ENCODE measurements at regions of chr2 and their contacts with region 1.

Region 1: DNA sequence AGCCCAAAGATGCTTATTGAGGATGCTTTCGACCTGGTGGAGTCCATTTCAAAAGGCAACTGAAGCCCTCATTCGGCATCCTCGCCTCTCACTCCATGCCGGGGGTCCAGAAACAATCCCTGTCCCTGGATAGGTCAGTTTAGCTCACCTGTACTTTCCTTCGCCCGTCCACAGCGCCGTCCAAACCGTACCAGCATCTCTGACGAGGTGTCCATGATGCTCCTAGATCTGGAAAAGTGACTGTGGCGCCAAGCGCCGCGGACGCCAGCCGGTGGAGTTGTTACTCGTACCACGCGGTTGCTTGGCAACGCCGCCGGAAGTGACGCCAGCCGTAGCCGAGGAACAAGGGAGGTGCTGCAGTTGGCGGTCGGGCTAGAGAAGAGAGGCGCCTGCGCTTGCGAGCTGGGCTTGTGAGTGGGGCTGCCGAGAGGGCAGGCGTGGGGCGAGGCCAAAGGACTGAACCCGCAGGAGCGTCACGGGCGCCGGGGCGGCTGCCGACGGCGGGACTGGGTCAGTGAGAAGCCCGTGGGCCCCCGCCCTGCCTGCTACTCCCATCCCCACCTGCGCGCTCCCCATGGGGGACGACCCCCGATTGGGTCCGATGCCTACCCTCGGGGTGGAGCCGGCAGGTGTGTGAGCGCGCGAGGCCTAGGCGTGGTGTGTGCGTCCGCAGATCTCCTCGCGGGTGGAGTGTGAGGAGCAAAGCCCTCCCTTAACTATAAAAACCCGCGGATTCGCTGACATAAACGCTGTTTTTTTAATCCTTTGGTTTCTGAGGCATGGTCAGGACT is at the starts of genes CFAP210 and PHOSPHO2:
- DNase-seq: peak; percentile 96 to 99 (median 98)
- ATAC-seq: peak; percentile 96
- H3K4me3 ChIP-seq: peak within 1 kb of the TSS; percentile 61
- H3K4me3 Mint-ChIP-seq: peak within 1 kb of the TSS; percentile 86 to 98 (median 90)
- H3K27ac ChIP-seq: peak within 1 kb of the TSS; percentile 87
- H3K27ac Mint-ChIP-seq: peak within 1 kb of the TSS; percentile 88 to 100 (median 99)
- H3K4me1 ChIP-seq: peaks cover 5 to 6% of the 10 kb centered on the region in 2 donors
- H3K4me1 Mint-ChIP-seq: peaks cover 5 to 22% (median 18%) of the 10 kb centered on the region in 7 donors
- H3K27me3 ChIP-seq: no peaks in the 10 kb centered on the region
- H3K27me3 Mint-ChIP-seq: peaks cover 0 to 30% (median 10%) of the 10 kb centered on the region in 5 donors
- total RNA-seq, gene CFAP210: 1.0 to 3.6 TPM in 2 of 5 experiments, not detected in the others
- total RNA-seq, gene PHOSPHO2: 4.5 to 9.5 (median 7.5) TPM

Region 2: GRCh38 chr2:169363560-169364150 is 330.7 kb before region 1 on chr2:
- CTCF ChIA-PET with region 1: no interaction called
- POLR2A ChIA-PET with region 1: no interaction called
- intact Hi-C with region 1: loop called in 1 of 2 experiments (anchors 5 kb)
- DNase-seq: peak in 8 of 9 donors; percentile 14 to 49 (median 38)
- ATAC-seq: peak; percentile 58
- H3K4me3 ChIP-seq: peak overlapping the region; percentile 89
- H3K4me3 Mint-ChIP-seq: peak overlapping the region; percentile 87 to 98 (median 94)
- H3K27ac ChIP-seq: no peak overlapping the region
- H3K27ac Mint-ChIP-seq: peak overlapping the region in 4 of 9 donors; percentile 14 to 88 (median 55)
- H3K4me1 ChIP-seq: peaks cover 11 to 18% of the 10 kb centered on the region in 2 donors
- H3K4me1 Mint-ChIP-seq: peaks cover 17 to 37% (median 29%) of the 10 kb centered on the region in 7 donors
- H3K27me3 ChIP-seq: peaks cover 4 to 15% of the 10 kb centered on the region in 2 donors
- H3K27me3 Mint-ChIP-seq: peaks cover 42 to 60% (median 49%) of the 10 kb centered on the region in 5 donors

Region 3: DNA sequence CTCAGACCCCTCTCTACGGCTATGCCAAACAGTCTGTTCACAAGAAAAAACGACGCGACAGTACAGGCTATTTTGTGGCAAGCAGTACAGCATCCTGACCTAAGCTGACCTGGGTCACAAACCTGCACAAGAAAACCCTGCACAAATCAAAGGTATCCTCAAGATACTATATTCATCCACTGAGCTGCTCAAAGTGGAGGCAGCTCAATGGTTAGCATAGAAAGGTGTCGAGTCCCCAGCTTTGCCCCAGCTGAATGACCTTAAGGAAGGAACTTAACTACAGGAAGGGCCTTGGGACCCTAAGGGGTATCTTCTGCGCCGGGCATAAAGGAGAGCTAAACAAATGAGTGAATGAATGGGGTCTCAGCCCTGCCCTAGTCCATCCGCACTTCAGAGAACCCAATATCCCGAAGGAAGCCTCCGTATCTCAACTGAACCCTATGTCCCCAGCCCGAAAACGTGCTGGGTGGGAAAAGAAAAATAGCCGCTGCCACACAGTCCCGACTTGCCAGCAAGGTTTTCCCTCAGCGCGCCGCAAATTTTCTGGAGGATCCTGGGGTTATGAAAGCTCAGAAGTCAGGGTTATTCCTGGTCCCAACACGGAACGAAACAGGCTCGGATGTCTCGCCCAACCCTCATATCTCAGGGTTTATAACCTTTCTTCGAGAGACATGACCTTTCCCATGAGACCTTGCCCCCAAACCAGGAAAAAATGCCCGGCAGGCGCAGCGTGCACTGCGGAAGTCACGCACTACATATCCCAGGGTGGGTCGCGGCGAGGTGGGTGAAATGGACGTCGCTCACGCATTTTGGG is 120.9 kb before region 1 on chr2 and contains the start of gene FASTKD1:
- CTCF ChIA-PET with region 1: no interaction called
- POLR2A ChIA-PET with region 1: no interaction called
- intact Hi-C with region 1: loop called (anchors 1 kb)
- DNase-seq: peak; percentile 55 to 88 (median 76)
- ATAC-seq: peak; percentile 100
- H3K4me3 ChIP-seq: peak within 1 kb of the TSS; percentile 93
- H3K4me3 Mint-ChIP-seq: peak within 1 kb of the TSS; percentile 88 to 99 (median 94)
- H3K27ac ChIP-seq: peak within 1 kb of the TSS; percentile 80
- H3K27ac Mint-ChIP-seq: peak within 1 kb of the TSS; percentile 74 to 95 (median 91)
- H3K4me1 ChIP-seq: peaks cover 4 to 5% of the 10 kb centered on the region in 2 donors
- H3K4me1 Mint-ChIP-seq: peaks cover 14 to 32% (median 24%) of the 10 kb centered on the region in 7 donors
- H3K27me3 ChIP-seq: no peaks in the 10 kb centered on the region
- H3K27me3 Mint-ChIP-seq: peaks cover 0 to 4% (median 0%) of the 10 kb centered on the region in 5 donors
- total RNA-seq, gene FASTKD1: 13.5 to 43.5 (median 31.0) TPM

Region 4: DNA sequence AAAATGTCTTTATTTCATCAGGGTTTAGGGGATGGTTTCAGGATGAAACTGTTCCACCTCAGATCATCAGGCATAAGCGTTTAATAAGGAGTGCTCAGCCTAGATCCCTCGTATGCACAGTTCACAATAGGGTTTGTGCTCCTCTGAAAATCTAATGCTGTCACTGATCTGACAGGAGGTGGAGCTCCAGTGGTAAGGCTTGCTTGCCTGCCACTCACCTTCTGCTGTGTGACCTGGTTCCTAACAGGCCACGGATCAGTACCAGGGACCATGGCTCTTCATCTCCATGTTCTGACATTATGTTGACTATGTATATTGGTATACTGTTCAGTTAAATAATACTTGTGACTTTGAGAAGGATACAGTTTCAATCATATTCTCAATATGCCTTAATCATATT is 68.5 kb before region 1 on chr2:
- CTCF ChIA-PET with region 1: no interaction called
- POLR2A ChIA-PET with region 1: no interaction called
- intact Hi-C with region 1: loop called in 1 of 2 experiments (anchors 5 kb)
- DNase-seq: no peak
- ATAC-seq: no peak
- H3K4me3 ChIP-seq: no peak overlapping the region
- H3K4me3 Mint-ChIP-seq: no peak overlapping the region
- H3K27ac ChIP-seq: no peak overlapping the region
- H3K27ac Mint-ChIP-seq: no peak overlapping the region
- H3K4me1 ChIP-seq: no peaks in the 10 kb centered on the region
- H3K4me1 Mint-ChIP-seq: peaks cover 0 to 15% (median 11%) of the 10 kb centered on the region in 7 donors
- H3K27me3 ChIP-seq: no peaks in the 10 kb centered on the region
- H3K27me3 Mint-ChIP-seq: no peaks in the 10 kb centered on the region

Region 5: GRCh38 chr2:169716238-169716886 is 22.1 kb after region 1 on chr2:
- CTCF ChIA-PET with region 1: no interaction called
- POLR2A ChIA-PET with region 1: no interaction called
- intact Hi-C with region 1: no loop called
- DNase-seq: no peak
- ATAC-seq: no peak
- H3K4me3 ChIP-seq: no peak overlapping the region
- H3K4me3 Mint-ChIP-seq: no peak overlapping the region
- H3K27ac ChIP-seq: no peak overlapping the region
- H3K27ac Mint-ChIP-seq: no peak overlapping the region
- H3K4me1 ChIP-seq: no peaks in the 10 kb centered on the region
- H3K4me1 Mint-ChIP-seq: peaks cover 0 to 15% (median 0%) of the 10 kb centered on the region in 7 donors
- H3K27me3 ChIP-seq: no peaks in the 10 kb centered on the region
- H3K27me3 Mint-ChIP-seq: no peaks in the 10 kb centered on the region

Region 6: GRCh38 chr2:169798718-169799592 is 104.6 kb after region 1 on chr2 and contains the start of gene SSB:
- CTCF ChIA-PET with region 1: interaction called, 7 read pairs
- POLR2A ChIA-PET with region 1: interaction called, 8 read pairs
- intact Hi-C with region 1: loop called (anchors 1 kb)
- DNase-seq: peak; percentile 75 to 93 (median 83)
- ATAC-seq: peak; percentile 95
- H3K4me3 ChIP-seq: peak within 1 kb of the TSS; percentile 84
- H3K4me3 Mint-ChIP-seq: peak within 1 kb of the TSS; percentile 80 to 94 (median 90)
- H3K27ac ChIP-seq: peak within 1 kb of the TSS; percentile 95
- H3K27ac Mint-ChIP-seq: peak within 1 kb of the TSS; percentile 87 to 97 (median 94)
- H3K4me1 ChIP-seq: peaks cover 11 to 21% of the 10 kb centered on the region in 2 donors
- H3K4me1 Mint-ChIP-seq: peaks cover 10 to 50% (median 37%) of the 10 kb centered on the region in 7 donors
- H3K27me3 ChIP-seq: no peaks in the 10 kb centered on the region
- H3K27me3 Mint-ChIP-seq: peaks cover 0 to 9% (median 0%) of the 10 kb centered on the region in 5 donors
- total RNA-seq, gene SSB: 88.3 to 104 (median 102) TPM